ENCODE measurements at regions of chr9 and their contacts with region 1.

Region 1: GRCh38 chr9:86434039-86434726 is 80.0 kb upstream of the TUT7 start:
- DNase-seq: no peak
- ATAC-seq: no peak
- H3K4me3 Mint-ChIP-seq: no peak overlapping the region
- H3K27ac Mint-ChIP-seq: no peak overlapping the region
- H3K4me1 Mint-ChIP-seq: no peaks in the 10 kb centered on the region
- H3K27me3 Mint-ChIP-seq: peaks cover 16% of the 10 kb centered on the region
- CTCF ChIP-seq: no peak

Region 2: DNA sequence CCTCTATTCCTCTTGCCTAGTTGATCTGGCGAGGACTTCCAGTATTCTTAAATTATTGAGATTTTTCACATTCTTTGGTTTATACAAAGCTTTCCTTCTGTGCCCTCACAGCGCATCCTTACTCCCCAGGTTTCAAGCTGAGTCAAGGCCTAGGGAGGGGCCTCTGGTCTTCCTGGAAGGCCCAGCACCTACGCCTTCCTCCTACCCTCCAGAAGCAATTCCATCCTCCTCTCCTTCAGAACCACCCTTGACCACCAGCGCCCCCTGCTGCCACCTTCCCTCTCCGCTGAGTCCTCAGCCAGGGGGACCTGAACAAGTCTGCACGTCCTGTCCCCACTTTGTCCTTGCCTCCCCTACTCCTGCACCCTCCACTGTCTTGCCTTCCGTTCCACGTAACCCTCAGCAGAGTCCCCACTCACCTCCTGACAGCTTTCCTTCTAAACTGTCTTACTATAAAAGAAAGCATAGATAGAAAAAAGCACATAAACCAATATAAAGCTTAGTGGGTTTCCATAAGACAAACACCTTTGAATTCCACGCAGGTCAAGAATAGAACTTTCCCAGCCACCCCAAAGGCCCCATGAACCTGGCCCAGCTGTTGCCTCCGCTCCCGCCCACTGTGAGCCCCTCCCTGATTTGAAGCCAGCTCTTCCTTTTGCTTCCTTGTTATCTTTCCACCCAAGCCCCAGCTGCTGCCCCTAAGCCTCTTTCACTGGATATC is 1228.8 kb after region 1 on chr9:
- CTCF ChIA-PET with region 1: no interaction called
- POLR2A ChIA-PET with region 1: no interaction called
- intact Hi-C with region 1: loop called (anchors 10 kb)
- DNase-seq: no peak
- ATAC-seq: no peak
- H3K4me3 Mint-ChIP-seq: no peak overlapping the region
- H3K27ac Mint-ChIP-seq: no peak overlapping the region
- H3K4me1 Mint-ChIP-seq: no peaks in the 10 kb centered on the region
- H3K27me3 Mint-ChIP-seq: no peaks in the 10 kb centered on the region
- CTCF ChIP-seq: no peak

Measured in activated B cell treated with CpG ODN at 0.5 μM for 24 hours (primary cell).